K562 (cell line): ENCODE measurements at regions of chr17 and their contacts with region 1.

Region 1: DNA sequence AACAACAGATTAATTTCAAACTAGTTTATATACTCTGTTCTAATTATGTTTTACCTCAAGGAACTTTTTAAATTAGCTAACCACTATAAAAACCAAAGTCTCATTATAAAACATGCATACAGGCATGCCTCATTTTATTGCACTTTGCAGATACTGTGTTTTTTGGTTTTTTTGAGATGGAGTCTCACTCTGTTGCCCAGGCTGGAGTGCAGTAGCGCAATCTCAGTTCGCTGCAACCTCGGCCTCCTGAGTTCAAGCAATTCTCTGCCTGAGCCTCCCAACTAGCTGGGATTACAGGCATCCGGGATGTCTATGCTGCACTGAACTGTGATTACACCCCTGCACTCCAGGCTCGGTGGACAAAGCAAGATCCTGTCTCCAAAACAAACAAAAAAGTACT is 8.8 kb upstream of the JPT1 start:
- DNase-seq: no peak
- ATAC-seq: no peak
- H3K4me3 ChIP-seq: no peak overlapping the region
- H3K27ac ChIP-seq: no peak overlapping the region
- H3K4me1 ChIP-seq: no peaks in the 10 kb centered on the region
- H3K27me3 ChIP-seq: no peaks in the 10 kb centered on the region
- CTCF ChIP-seq: no peak
- EP300 ChIP-seq: no peak
- POLR2A ChIP-seq: no peak
- RAD21 ChIP-seq: no peak

Region 2: GRCh38 chr17:75173526-75173925 is 10.5 kb after region 1 on chr17:
- CTCF ChIA-PET with region 1: no interaction called
- POLR2A ChIA-PET with region 1: interaction called, 17 read pairs
- in situ Hi-C with region 1: no loop called
- intact Hi-C with region 1: no loop called
- DNase-seq: no peak
- ATAC-seq: no peak
- H3K4me3 ChIP-seq: no peak overlapping the region
- H3K27ac ChIP-seq: no peak overlapping the region
- H3K4me1 ChIP-seq: no peaks in the 10 kb centered on the region; a peak in 1 of 5 replicates
- H3K27me3 ChIP-seq: no peaks in the 10 kb centered on the region
- CTCF ChIP-seq: no peak
- EP300 ChIP-seq: no peak
- POLR2A ChIP-seq: no peak
- RAD21 ChIP-seq: no peak

Region 3: DNA sequence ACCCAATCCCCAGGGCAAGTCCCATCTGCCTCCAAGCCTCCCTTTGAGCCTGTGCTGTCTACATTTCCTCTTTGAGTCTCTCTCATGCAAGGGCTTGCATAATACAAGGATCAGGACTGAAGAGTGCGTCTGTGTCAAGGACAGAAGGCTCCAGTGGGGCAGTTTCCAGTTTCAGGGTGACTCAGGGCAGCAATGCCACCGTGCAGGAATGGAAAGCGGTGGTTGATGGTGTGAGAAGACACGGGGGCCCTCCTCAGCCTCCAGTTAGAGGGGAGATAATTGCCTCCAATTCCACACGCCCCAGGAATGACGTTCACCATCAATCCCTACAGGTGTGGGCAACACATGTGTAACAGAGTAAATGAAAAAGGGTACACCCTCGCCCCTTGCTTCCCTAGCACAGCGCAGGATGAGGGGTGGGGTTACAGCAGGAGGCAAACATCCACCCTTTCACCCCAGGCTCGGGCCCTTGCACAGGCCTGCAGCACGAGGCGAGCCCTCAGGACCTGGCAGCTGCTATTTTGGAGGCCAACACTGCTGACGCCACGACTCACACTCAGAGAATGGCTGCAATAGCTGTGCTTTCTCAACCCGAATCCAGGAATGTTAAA is 151.0 kb after region 1 on chr17:
- CTCF ChIA-PET with region 1: no interaction called
- POLR2A ChIA-PET with region 1: no interaction called
- in situ Hi-C with region 1: no loop called
- intact Hi-C with region 1: no loop called
- DNase-seq: no peak
- ATAC-seq: no peak
- H3K4me3 ChIP-seq: no peak overlapping the region
- H3K27ac ChIP-seq: no peak overlapping the region
- H3K4me1 ChIP-seq: peaks cover 0 to 19% of the 10 kb centered on the region in 2 experiments; a peak in 4 of 5 replicates
- H3K27me3 ChIP-seq: no peaks in the 10 kb centered on the region
- CTCF ChIP-seq: no peak
- EP300 ChIP-seq: no peak
- POLR2A ChIP-seq: no peak
- RAD21 ChIP-seq: no peak